ENCODE measurements at regions of chr3 and their contacts with region 1.

Region 1: DNA sequence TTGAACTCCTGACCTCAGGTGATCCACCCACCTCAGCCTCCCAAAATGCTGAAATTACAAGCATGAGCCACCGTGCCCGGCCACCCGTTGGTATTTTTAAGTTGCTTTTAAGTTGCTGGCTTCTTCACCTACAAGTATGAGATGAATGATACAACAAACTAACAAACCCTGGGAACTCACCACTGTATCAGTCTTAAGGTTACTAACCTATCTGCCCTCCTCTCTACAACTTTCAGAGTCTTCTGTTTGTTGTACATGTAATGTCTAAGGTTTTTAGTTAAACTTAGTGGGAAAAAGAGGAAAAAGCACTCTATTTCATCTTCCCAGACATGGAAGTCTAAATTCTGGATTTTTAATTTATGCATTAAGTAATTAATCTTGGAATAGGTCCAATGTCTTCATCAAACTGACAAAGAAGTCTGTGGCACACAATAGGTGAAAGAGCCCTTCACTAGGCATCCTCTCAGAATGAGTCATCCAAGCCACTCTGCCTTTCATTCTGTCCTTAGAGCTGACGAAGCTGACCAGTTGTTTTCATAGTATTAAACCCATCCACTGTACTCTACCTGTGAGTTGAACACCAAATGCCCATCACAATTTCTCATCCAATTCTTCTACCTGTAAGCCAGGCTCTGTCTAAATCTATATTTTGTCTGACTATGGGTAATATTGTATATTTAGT is 936.1 kb downstream of the TUSC7 start:
- DNase-seq: no peak
- H3K4me3 ChIP-seq: no peak overlapping the region
- H3K27ac ChIP-seq: no peak overlapping the region
- H3K4me1 ChIP-seq: no peaks in the 10 kb centered on the region
- H3K27me3 ChIP-seq: no peaks in the 10 kb centered on the region
- CTCF ChIP-seq: no peak

Region 2: GRCh38 chr3:117660941-117661817 is 15.5 kb after region 1 on chr3:
- CTCF ChIA-PET with region 1: no interaction called
- dilution Hi-C with region 1: no loop called
- in situ Hi-C with region 1: no loop called
- intact Hi-C with region 1: loop called (anchors 1 kb)
- DNase-seq: no peak
- H3K4me3 ChIP-seq: no peak overlapping the region
- H3K27ac ChIP-seq: no peak overlapping the region
- H3K4me1 ChIP-seq: no peaks in the 10 kb centered on the region
- H3K27me3 ChIP-seq: no peaks in the 10 kb centered on the region
- CTCF ChIP-seq: no peak